Pancreas (tissue), 10 donors: ENCODE measurements at regions of chr11 and their contacts with region 1.

Region 1: DNA sequence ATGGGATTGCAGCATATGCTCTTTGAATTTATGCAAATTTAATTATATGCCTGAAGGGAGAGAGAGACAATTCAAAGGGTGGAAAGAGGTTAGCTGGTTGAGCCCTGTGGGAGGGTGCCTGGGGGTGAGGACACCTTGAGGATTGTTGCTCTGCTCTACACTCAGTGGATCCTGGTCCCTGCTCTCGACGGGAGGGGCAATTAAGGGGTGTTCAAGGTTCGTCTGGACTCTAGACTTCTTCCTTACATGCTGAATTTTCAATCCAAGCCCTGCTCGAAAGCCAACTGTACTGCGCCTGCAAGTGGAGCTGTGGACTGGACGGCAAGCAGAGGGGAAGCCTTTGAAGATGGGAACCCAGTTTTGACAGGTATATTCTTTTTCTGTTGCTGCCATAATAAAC is 15.5 kb upstream of the OR5M11 start:
- DNase-seq: no peak
- ATAC-seq: no peak
- H3K4me3 ChIP-seq: no peak overlapping the region
- H3K27ac ChIP-seq: no peak overlapping the region
- H3K4me1 ChIP-seq: no peaks in the 10 kb centered on the region
- H3K27me3 ChIP-seq: no peaks in the 10 kb centered on the region
- CTCF ChIP-seq: no peak

Region 2: GRCh38 chr11:56271092-56271491 is 287.5 kb before region 1 on chr11:
- intact Hi-C with region 1: no loop called
- DNase-seq: no peak
- ATAC-seq: no peak
- H3K4me3 ChIP-seq: no peak overlapping the region
- H3K27ac ChIP-seq: no peak overlapping the region
- H3K4me1 ChIP-seq: no peaks in the 10 kb centered on the region
- H3K27me3 ChIP-seq: no peaks in the 10 kb centered on the region
- CTCF ChIP-seq: no peak

Region 3: DNA sequence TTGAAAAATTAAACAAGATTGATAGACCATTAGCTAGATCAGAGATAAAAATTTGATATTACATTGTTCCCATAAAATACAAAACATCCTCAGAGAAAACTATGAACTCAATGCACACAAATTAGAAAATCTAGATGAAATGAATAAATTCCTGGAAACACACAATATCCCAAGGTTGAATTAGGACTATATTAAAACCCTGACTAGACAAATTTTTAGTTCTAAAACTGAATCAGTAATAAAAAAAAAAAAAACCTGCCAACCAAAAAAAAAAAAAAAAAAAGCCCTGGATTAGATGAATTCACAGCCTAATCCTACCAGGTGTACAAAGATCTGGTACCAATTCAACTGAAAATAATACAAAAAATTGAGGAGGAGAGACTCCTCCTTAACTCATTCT is 218.3 kb before region 1 on chr11:
- intact Hi-C with region 1: no loop called
- DNase-seq: no peak
- ATAC-seq: no peak
- H3K4me3 ChIP-seq: no peak overlapping the region
- H3K27ac ChIP-seq: no peak overlapping the region
- H3K4me1 ChIP-seq: no peaks in the 10 kb centered on the region
- H3K27me3 ChIP-seq: no peaks in the 10 kb centered on the region
- CTCF ChIP-seq: no peak

Region 4: GRCh38 chr11:56509439-56509838 is 49.1 kb before region 1 on chr11:
- intact Hi-C with region 1: loop called in 1 of 3 experiments (anchors 10 kb)
- DNase-seq: no peak
- ATAC-seq: no peak
- H3K4me3 ChIP-seq: no peak overlapping the region
- H3K27ac ChIP-seq: no peak overlapping the region
- H3K4me1 ChIP-seq: no peaks in the 10 kb centered on the region
- H3K27me3 ChIP-seq: no peaks in the 10 kb centered on the region
- CTCF ChIP-seq: no peak

Region 5: DNA sequence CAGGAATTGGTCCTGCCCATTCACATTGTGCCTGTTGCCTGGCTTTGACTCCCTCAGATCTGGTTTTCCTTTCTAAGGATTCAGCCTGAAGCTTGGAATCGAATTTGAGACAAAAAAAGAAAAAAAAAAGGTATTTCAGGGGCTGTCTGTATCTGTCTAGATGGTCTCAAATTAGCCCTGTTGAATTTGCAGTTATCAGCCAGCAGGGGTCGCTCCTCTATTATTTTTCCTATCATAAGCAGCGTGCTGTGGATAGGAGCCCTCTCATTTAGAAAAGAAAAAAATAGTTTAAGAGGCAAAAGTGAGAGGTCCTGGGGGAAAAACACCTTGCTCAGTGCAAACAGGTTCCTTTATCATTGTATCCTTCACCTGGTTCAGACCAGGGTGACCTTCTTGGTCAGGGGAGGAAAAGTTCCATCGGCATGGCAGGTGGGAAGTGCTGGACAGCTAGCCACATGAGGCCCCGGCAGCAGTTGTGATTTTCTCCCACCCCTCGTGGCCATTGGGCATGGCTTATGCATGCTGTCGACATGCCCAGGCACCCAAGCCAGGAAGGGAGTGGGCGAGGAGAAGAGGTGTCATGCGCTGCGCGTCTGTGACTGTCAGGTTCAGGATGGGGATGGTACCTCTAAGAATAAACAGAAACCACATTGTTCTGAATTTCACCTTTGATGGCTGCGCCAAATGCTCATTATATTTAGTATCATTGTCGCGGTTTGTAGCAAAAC is 443.3 kb after region 1 on chr11:
- intact Hi-C with region 1: no loop called
- DNase-seq: no peak
- ATAC-seq: no peak
- H3K4me3 ChIP-seq: no peak overlapping the region
- H3K27ac ChIP-seq: no peak overlapping the region
- H3K4me1 ChIP-seq: no peaks in the 10 kb centered on the region
- H3K27me3 ChIP-seq: no peaks in the 10 kb centered on the region
- CTCF ChIP-seq: no peak